Activated CD4-positive, alpha-beta T cell treated with anti-CD3 and anti-CD28 coated beads for 36 hours (primary cell): ENCODE measurements at regions of chr20 and their contacts with region 1.

Region 1: GRCh38 chr20:20452254-20452676 is 84.4 kb downstream of the INSM1 start:
- DNase-seq: peak; percentile 84
- ATAC-seq: peak; percentile 97
- H3K4me3 Mint-ChIP-seq: peak overlapping the region; percentile 78
- H3K27ac Mint-ChIP-seq: peak overlapping the region; percentile 71
- H3K4me1 Mint-ChIP-seq: peaks cover 46% of the 10 kb centered on the region
- H3K27me3 Mint-ChIP-seq: no peaks in the 10 kb centered on the region

Region 2: DNA sequence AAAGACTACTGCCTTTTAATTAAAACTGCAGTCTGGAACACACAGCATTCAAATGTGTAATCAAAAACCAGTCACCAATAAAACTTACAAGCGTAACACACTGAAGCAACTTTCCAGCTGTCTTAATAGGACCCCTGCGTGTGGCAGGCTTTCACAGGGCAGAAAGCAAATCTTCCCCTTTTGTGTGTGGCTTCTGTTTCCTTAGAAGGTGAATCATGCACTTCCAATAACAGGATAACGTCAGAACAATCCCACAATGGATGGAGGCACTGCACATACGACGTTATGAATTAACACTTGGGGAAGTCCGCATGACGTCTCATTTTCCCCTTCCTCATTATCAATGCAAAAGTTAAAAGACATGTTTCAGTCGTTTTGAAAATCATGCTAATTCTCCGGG is 39.5 kb before region 1 on chr20:
- CTCF ChIA-PET with region 1: interaction called, 5 read pairs
- POLR2A ChIA-PET with region 1: no interaction called
- intact Hi-C with region 1: loop called in 1 of 2 experiments (anchors 5 kb)
- DNase-seq: peak; percentile 55
- ATAC-seq: peak; percentile 86
- H3K4me3 Mint-ChIP-seq: peak overlapping the region; percentile 63
- H3K27ac Mint-ChIP-seq: peak overlapping the region; percentile 92
- H3K4me1 Mint-ChIP-seq: peaks cover 60% of the 10 kb centered on the region
- H3K27me3 Mint-ChIP-seq: no peaks in the 10 kb centered on the region

Region 3: GRCh38 chr20:20505554-20505953 is 53.3 kb after region 1 on chr20:
- CTCF ChIA-PET with region 1: interaction called, 3 read pairs
- POLR2A ChIA-PET with region 1: no interaction called
- intact Hi-C with region 1: loop called in 1 of 2 experiments (anchors 1 kb)
- DNase-seq: peak; percentile 20
- ATAC-seq: peak; percentile 76
- H3K4me3 Mint-ChIP-seq: no peak overlapping the region
- H3K27ac Mint-ChIP-seq: no peak overlapping the region
- H3K4me1 Mint-ChIP-seq: peaks cover 22% of the 10 kb centered on the region
- H3K27me3 Mint-ChIP-seq: no peaks in the 10 kb centered on the region

Region 4: DNA sequence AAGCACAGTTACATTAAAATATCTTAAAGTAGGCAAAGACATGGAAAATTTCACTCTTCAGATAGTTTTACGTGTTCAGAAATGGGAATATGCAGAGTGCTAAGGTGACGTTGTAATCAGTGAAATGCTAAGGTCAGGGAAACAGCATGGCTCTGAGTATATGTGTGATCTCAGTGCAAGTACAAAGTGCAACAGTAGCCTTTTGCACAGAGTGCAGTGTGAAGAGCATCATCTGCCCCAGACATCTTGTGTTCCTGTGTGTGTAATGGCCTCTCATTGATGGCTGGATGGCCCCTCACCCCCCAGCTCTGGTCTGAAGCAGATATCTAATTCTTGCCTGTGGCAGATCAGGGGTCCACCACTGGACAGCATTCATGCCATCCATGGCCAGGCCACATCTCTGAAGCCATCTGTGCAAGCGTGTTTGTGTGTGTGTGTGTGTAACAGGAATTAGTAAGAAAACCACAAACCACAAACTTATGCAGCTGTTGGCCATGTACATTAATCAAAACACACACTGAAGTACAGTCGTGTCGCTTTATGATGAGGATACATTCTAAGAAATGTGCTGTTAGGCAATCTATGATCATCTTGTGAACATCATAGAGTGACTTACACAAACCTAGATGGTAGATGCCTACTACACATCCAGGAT is 95.1 kb after region 1 on chr20:
- CTCF ChIA-PET with region 1: no interaction called
- POLR2A ChIA-PET with region 1: no interaction called
- intact Hi-C with region 1: no loop called
- DNase-seq: peak; percentile 14
- ATAC-seq: peak; percentile 68
- H3K4me3 Mint-ChIP-seq: no peak overlapping the region
- H3K27ac Mint-ChIP-seq: no peak overlapping the region
- H3K4me1 Mint-ChIP-seq: peaks cover 36% of the 10 kb centered on the region
- H3K27me3 Mint-ChIP-seq: no peaks in the 10 kb centered on the region

Region 5: GRCh38 chr20:20649945-20650344 is 197.7 kb after region 1 on chr20:
- CTCF ChIA-PET with region 1: no interaction called
- POLR2A ChIA-PET with region 1: no interaction called
- intact Hi-C with region 1: no loop called
- DNase-seq: no peak
- ATAC-seq: no peak
- H3K4me3 Mint-ChIP-seq: no peak overlapping the region
- H3K27ac Mint-ChIP-seq: no peak overlapping the region
- H3K4me1 Mint-ChIP-seq: no peaks in the 10 kb centered on the region
- H3K27me3 Mint-ChIP-seq: no peaks in the 10 kb centered on the region

Region 6: GRCh38 chr20:20712474-20713243 is 260.4 kb after region 1 on chr20 and contains the start of gene RALGAPA2:
- CTCF ChIA-PET with region 1: no interaction called
- POLR2A ChIA-PET with region 1: no interaction called
- intact Hi-C with region 1: no loop called
- DNase-seq: peak; percentile 97
- ATAC-seq: peak; percentile 97
- H3K4me3 Mint-ChIP-seq: peak within 1 kb of the TSS; percentile 90
- H3K27ac Mint-ChIP-seq: peak within 1 kb of the TSS; percentile 95
- H3K4me1 Mint-ChIP-seq: peaks cover 27% of the 10 kb centered on the region
- H3K27me3 Mint-ChIP-seq: peaks cover 2% of the 10 kb centered on the region
- total RNA-seq, gene RALGAPA2: 20.2 to 26.4 TPM